Left ventricle myocardium superior (tissue), 1 donor: ENCODE measurements at regions of chr2 and their contacts with region 1.

Region 1: DNA sequence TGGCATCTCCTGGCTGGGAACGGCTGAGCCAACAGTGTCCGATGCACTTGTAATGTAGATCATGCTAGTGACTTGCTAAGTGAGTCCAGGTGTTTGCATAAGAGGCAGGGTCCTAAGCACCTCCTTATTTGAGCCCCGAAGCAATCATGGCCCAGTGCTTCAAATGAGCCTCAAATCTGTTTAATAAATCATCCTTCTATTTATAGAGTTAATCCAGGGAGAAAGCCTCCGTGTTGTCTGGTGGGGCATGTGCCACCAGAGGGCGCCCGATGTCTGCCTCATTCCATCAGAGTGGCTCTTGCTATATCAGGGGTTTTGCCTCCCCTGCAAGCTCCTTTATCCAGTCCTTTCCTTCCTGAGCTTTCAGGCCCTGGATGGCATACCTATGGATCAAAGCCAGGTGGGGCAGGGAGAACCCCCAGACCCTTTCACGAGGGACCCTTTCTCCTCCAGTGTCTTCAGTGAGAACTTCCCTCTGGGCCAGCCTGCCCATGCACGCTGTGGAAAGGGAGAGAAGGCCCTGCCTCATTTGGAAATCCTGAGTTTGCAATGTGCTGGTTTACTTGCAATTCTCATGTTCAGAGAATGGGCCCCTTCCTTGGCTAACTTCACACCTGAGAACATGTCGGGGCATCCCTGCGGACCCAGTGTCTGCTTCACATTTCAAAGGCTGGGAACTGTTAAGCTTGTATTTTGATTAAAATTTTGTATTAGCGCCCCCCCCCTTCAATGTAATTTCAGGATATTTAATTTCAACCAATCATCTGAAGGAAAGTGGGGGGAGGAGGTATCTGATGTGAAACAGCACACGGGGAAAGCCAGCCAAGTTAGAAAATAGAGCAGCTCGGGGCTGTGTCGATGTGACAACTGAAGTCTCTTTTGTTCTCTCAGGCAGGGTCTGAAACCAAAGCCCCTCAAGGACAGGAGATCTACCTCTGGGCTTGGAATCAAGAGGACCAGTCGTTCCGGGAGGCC is 39.7 kb downstream of the RDH14 start:
- DNase-seq: peak; percentile 93
- ATAC-seq: peak; percentile 84

Region 2: GRCh38 chr2:17544256-17544655 is 976.5 kb before region 1 on chr2:
- intact Hi-C with region 1: no loop called
- DNase-seq: no peak
- ATAC-seq: no peak

Region 3: DNA sequence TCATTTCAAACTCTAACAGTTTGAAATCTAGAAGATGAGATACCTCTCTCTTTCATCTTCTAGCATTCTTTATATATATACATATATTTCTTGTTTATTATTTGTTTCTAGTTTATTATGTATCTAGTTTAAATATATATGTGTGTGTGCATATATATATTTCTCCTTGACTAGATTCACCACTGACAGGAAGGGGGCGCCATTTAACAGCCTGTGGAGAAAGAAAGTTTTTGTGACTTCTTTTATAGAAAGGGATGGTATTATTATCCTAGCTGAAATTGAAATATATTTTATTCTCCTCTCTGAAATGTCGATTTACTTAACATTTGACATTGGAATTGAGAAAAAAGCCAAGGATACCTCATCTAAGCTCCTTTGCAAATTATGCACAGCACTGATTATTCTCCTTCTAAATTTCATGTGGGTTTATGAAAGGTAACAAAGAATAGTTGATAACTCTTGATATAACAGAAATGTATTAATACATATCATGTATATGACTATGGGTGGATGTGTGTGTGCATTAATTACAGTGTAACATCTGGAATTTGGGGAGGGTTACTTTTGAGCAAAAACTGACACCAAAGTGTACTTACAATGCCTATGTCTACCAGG is 229.3 kb after region 1 on chr2:
- intact Hi-C with region 1: loop called (anchors 10 kb)
- DNase-seq: no peak
- ATAC-seq: peak; percentile 52

Region 4: DNA sequence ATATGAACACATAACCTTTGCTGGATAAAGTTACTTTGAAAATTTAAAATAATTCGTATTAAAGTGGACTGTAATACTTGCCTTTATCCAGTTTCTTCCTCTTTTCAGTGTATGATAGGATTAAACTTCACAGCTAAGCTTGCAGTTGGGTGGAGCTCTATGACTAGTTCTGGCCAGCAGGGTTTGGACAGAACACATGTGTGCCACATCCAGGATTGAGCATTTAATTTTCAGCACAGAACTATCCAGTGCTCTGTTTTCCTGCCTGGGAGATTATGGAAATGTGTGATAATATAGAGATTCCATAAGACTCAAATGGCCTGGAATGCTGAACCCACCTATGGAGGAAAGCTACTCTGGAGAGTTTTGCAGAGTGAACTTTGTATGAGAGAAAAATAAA is 637.5 kb after region 1 on chr2:
- intact Hi-C with region 1: no loop called
- DNase-seq: no peak
- ATAC-seq: no peak

Region 5: GRCh38 chr2:19863303-19864041 is 1342.7 kb after region 1 on chr2:
- intact Hi-C with region 1: loop called (anchors 5 kb)
- DNase-seq: peak; percentile 84
- ATAC-seq: peak; percentile 89